ENCODE measurements at regions of chr9 and their contacts with region 1.

Region 1: DNA sequence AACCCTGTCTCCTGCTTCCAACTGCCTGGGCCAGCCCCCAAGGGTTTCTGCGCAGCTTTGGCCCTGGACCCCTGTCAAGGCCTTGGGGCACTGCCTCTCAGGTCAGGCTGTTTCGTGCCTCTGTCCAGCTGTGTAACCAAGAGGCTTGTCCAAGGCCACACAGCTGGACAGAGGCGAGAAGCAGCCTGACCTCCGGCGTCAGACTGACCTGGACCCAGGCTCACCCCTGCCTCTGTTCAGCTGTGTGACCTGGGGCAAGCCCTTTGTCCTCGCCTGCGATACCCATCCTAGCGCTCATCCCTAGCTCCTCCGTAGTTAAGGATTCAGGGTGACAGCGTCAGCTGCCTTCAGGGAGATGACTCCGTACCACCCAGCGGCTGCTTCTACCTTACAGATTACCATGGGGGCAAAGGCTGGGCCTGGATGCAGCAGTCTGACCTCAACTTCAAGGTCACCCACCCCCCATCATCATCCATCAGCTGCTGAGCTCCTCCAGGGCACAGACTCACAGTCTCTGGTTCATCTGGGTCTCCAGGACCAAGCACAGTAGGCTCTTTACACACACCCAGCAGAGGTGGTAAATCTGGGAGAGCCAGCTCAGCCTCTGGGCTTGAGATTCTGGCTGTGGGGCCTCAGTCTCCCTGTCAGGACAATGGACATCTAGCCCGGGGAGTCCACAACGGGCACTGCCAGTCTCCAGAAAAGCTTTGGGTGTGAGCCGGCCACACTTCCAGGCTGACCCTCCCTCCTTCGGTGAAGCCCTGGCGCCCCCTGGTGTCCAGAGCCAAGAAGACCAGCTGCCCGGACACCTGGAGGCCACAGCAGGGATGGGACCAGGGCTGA is 7.9 kb downstream of the AK1 start:
- DNase-seq: peak; percentile 94
- CTCF ChIP-seq: peak; percentile 96

Region 2: GRCh38 chr9:127130661-127131538 is 738.6 kb before region 1 on chr9:
- CTCF ChIA-PET with region 1: no interaction called
- POLR2A ChIA-PET with region 1: no interaction called
- DNase-seq: no peak
- CTCF ChIP-seq: no peak

Region 3: DNA sequence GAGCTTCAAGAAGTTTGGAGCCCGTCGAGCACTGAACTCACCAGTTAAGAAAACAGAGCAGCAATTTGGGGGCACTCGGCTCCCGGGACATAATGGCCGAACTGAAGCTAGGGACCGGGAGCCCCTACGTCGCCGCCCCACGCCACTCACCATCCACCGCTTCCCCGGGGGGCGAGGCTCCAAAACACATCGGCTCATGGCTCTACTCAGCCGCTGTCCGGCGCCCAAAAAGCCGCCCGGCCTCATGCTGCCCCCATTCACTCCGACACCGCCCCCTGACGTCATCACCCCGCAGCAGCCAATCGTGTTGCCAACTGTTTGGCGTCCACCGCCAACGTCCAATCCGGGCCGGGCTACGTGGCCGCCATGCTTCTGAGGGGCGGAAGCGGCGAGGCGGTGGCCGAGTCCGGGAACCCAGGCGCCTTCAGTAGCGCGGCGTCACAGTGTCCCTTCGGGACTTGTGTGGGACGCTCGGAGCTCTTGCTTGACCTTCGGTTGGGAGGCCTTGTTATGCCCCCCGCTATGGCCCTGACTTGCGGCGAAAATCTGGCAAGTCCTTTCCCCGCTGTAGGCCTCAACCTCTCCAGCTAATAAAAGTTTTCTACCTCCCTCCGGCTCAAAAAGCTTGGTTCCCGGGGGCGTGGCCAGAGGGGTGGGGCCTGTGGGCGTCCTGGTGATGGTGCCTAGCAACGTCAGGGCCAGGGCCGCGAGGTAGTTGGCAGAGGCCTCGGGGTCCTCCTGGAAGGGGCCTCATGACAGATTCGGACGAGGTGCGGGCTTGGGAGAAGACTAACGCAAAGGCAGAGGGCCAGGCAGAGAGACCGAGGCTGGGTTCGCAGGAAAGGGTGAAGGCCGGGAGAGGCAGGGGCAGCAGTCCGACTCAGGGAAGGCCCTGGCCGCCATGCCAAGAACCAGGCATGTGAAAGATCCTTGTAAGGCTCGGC is 153.9 kb before region 1 on chr9 and contains the starts of genes PTRH1 and TTC16:
- CTCF ChIA-PET with region 1: interaction called, 12 read pairs
- POLR2A ChIA-PET with region 1: no interaction called
- DNase-seq: peak; percentile 99
- CTCF ChIP-seq: no peak

Region 4: GRCh38 chr9:127770905-127771569 is 98.5 kb before region 1 on chr9:
- CTCF ChIA-PET with region 1: interaction called, 21 read pairs
- POLR2A ChIA-PET with region 1: no interaction called
- DNase-seq: peak; percentile 97
- CTCF ChIP-seq: no peak

Region 5: DNA sequence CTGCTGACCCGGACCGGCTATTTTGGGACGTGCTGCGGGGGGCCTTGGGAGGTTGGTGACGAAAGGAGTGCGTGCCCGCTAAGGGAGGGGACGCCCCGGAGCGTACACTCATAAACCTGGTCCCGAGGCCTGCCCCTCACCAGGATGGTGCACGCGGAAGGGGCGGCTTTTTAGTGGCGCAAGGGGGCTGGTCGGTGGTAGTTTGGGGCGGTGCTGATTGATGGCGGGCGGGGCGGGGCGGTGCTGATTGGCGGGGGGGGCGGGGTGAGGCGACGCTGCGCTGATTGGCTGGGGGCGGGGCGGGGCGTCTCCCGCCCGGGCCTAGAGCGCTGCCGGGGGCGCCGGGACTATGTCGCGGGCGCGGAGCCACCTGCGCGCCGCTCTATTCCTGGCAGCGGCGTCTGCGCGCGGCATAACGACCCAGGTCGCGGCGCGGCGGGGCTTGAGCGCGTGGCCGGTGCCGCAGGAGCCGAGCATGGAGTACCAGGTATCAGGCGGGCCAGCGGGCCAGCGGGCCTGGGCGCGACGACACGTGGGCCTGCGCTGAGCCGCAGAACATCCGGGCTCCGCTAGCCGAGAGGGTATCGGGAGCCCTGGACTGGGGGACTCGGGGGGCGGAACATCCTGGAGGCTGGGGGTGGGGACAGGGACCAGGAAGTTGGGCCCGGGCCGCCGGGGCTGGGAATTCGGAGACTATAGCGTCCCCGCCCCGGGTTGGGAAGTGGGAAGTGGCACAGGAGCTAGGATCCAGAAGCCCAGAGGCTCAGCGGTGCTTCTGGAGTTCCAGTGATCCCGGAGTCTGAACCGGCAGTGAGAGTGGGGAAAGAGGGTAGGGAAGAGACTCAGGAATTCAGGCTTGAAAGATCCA is 66.7 kb before region 1 on chr9 and contains the start of gene FPGS:
- CTCF ChIA-PET with region 1: interaction called, 12 read pairs
- POLR2A ChIA-PET with region 1: no interaction called
- DNase-seq: peak; percentile 97
- CTCF ChIP-seq: no peak

Region 6: GRCh38 chr9:127854184-127854806 is 15.2 kb before region 1 on chr9 and contains the start of gene ENG:
- CTCF ChIA-PET with region 1: interaction called, 34 read pairs
- POLR2A ChIA-PET with region 1: no interaction called
- DNase-seq: no peak
- CTCF ChIP-seq: peak; percentile 11

Region 7: GRCh38 chr9:127916665-127917613 is 47.4 kb after region 1 on chr9 and contains the start of gene ST6GALNAC4:
- CTCF ChIA-PET with region 1: interaction called, 34 read pairs
- POLR2A ChIA-PET with region 1: no interaction called
- DNase-seq: peak; percentile 99
- CTCF ChIP-seq: no peak

Region 8: GRCh38 chr9:128191406-128192046 is 322.0 kb after region 1 on chr9 and contains the start of gene CIZ1:
- CTCF ChIA-PET with region 1: no interaction called
- POLR2A ChIA-PET with region 1: no interaction called
- DNase-seq: peak; percentile 93
- CTCF ChIP-seq: peak; percentile 86

Region 9: DNA sequence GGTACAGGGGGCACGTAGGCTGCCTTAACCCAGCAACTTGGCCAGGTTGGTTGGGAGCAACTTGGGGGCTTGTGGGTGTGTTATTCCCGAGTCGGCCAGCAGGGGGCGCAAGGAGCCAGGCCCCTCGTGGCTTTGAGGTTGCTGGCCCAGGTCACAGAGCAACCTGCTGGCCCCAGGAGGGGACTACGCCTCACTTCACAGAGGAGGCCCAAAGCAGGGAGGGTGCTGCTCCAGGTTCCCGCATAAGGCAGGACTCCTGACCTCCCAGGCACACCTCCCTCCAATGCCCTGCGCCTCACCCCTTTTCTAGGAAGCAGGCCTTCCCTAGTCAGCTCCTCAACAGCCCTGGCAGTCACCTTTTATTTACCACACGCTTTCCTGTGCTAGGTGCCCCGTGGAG is 994.1 kb after region 1 on chr9:
- CTCF ChIA-PET with region 1: no interaction called
- POLR2A ChIA-PET with region 1: no interaction called
- DNase-seq: peak; percentile 89
- CTCF ChIP-seq: peak; percentile 97